ENCODE measurements at regions of chr22 and their contacts with region 1.

Region 1: DNA sequence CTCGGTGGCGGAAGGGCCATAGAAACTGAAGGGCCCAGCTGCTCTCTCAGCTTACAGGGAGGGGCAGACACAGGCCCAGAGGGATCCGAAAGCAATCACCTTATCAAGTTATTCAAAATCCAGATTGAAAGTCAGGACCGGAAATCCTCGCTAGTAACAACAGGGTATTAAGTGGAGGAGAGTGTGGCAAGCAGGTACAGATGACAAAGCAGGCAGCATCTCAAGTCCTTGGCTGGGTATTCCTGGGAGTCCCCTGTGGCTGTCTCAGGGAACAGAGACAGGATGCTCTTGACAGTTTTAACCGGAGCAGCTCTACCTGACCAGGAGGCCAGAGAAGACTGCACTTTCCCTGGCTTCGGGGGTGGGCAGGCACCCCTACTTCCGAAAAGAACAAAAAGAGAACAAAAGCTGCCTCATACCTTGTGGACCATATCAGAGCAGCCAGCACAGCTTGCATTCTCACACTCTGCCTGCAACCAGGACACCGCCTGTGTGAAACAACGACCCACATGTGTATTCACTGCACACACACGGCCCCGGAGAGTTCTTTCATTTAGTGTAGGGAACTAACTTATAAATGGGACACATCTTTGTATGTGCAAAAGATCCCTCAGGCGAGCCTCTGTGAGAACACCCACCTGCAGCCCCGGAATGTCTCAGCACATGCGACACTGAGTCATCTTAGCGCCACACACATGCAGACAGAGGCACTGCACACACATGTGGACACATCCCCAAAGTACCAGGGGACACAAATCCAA is 78.3 kb downstream of the MICAL3 start:
- DNase-seq: peak in 22 of 42 donors; percentile 35 to 74 (median 47)

Region 2: GRCh38 chr22:17891481-17892167 is 54.4 kb before region 1 on chr22:
- intact Hi-C with region 1: loop called (anchors 10 kb)
- DNase-seq: peak in 40 of 42 donors; percentile 50 to 89 (median 70)

Region 3: GRCh38 chr22:18012531-18012930 is 66.5 kb after region 1 on chr22:
- intact Hi-C with region 1: no loop called
- DNase-seq: peak in 1 of 42 donors; percentile 13